ENCODE measurements at regions of chr10 and their contacts with region 1.

Region 1: GRCh38 chr10:24724381-24725228 is 918 bp upstream of the ARHGAP21 start:
- DNase-seq: peak; percentile 97
- H3K4me3 ChIP-seq: peak overlapping the region; percentile 50 to 95 (median 92)
- H3K27ac ChIP-seq: peak overlapping the region; percentile 78
- H3K4me1 ChIP-seq: peaks cover 26% of the 10 kb centered on the region
- H3K27me3 ChIP-seq: no peaks in the 10 kb centered on the region
- CTCF ChIP-seq: no peak
- POLR2A ChIP-seq: peak; percentile 94

Region 2: DNA sequence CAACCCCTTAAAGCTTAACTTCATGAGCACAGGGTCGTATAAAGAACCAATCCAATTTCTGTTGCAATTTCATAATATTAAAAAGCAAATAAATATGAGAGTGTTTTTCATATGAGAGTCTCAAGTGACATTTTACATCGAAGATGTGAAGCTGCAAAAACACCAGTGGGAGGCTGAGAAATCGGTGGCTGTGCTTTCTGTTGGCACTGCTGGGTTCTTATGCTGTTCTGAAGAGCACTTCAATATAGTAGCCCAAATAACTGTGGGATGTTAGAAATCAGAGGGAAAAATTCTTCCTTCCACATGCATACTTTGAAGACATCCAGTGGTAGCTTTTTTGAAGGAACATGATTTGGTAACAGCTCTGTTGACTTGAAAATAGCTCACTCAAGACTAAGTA is 246.7 kb before region 1 on chr10:
- CTCF ChIA-PET with region 1: no interaction called
- POLR2A ChIA-PET with region 1: no interaction called
- dilution Hi-C with region 1: no loop called
- intact Hi-C with region 1: no loop called
- DNase-seq: no peak
- H3K4me3 ChIP-seq: no peak overlapping the region
- H3K27ac ChIP-seq: no peak overlapping the region
- H3K4me1 ChIP-seq: no peaks in the 10 kb centered on the region
- H3K27me3 ChIP-seq: no peaks in the 10 kb centered on the region
- CTCF ChIP-seq: no peak
- POLR2A ChIP-seq: no peak

Region 3: GRCh38 chr10:24706479-24707118 is 18.0 kb before region 1 on chr10:
- CTCF ChIA-PET with region 1: interaction called, 6 read pairs
- POLR2A ChIA-PET with region 1: no interaction called
- dilution Hi-C with region 1: no loop called
- intact Hi-C with region 1: loop called (anchors 2 kb)
- DNase-seq: peak; percentile 76
- H3K4me3 ChIP-seq: no peak overlapping the region
- H3K27ac ChIP-seq: peak overlapping the region; percentile 32
- H3K4me1 ChIP-seq: peaks cover 18% of the 10 kb centered on the region
- H3K27me3 ChIP-seq: no peaks in the 10 kb centered on the region
- CTCF ChIP-seq: no peak
- POLR2A ChIP-seq: no peak

Region 4: GRCh38 chr10:24894309-24894708 is 169.7 kb after region 1 on chr10:
- CTCF ChIA-PET with region 1: interaction called, 3 read pairs
- POLR2A ChIA-PET with region 1: no interaction called
- dilution Hi-C with region 1: no loop called
- intact Hi-C with region 1: loop called (anchors 2 kb)
- DNase-seq: peak; percentile 52
- H3K4me3 ChIP-seq: no peak overlapping the region
- H3K27ac ChIP-seq: no peak overlapping the region
- H3K4me1 ChIP-seq: peaks cover 26% of the 10 kb centered on the region
- H3K27me3 ChIP-seq: no peaks in the 10 kb centered on the region
- CTCF ChIP-seq: no peak
- POLR2A ChIP-seq: no peak

Region 5: GRCh38 chr10:24989867-24990266 is 265.3 kb after region 1 on chr10:
- CTCF ChIA-PET with region 1: interaction called, 17 read pairs
- POLR2A ChIA-PET with region 1: no interaction called
- dilution Hi-C with region 1: no loop called
- intact Hi-C with region 1: loop called (anchors 1 kb)
- DNase-seq: peak; percentile 16
- H3K4me3 ChIP-seq: no peak overlapping the region
- H3K27ac ChIP-seq: no peak overlapping the region
- H3K4me1 ChIP-seq: peaks cover 5% of the 10 kb centered on the region
- H3K27me3 ChIP-seq: no peaks in the 10 kb centered on the region
- CTCF ChIP-seq: no peak
- POLR2A ChIP-seq: no peak